Left cardiac atrium (tissue), 4 donors: ENCODE measurements at regions of chr11 and their contacts with region 1.

Region 1: GRCh38 chr11:86477495-86478155 is 102.9 kb downstream of the CCDC81 start:
- DNase-seq: no peak
- ATAC-seq: peak; percentile 35 to 36

Region 2: DNA sequence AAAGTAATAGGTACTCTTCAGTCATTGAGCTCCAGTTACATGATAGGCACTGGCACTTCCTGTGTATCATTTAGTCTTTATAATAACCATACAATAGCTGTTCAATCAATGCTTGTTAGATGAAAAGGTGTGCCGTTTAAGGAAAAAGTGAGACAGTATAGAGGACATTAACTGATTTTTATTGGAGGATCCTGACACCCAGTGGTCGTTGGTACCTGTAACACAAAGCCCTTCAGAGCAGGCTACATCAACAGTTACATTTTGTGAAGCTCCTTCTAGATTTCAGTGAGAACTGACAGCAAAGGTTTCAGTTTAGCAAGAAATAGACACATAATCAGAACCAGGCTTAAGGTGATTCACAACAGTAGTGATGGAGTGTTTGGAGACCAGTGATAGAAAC is 58.7 kb before region 1 on chr11:
- intact Hi-C with region 1: no loop called
- DNase-seq: no peak
- ATAC-seq: no peak

Region 3: GRCh38 chr11:86559311-86559945 is 81.8 kb after region 1 on chr11:
- intact Hi-C with region 1: loop called in 1 of 2 experiments (anchors 5 kb)
- DNase-seq: peak; percentile 52
- ATAC-seq: peak; percentile 75 to 92